Activated CD8-positive, alpha-beta T cell treated with anti-CD3 and anti-CD28 coated beads, Interleukin-2, amount 10 ng/mL, durations not matched to agents 7 days and 5 days (primary cell): ENCODE measurements at regions of chr2 and their contacts with region 1.

Region 1: GRCh38 chr2:85826990-85827878 is 61.6 kb downstream of the ST3GAL5 start:
- DNase-seq: peak; percentile 89
- ATAC-seq: peak; percentile 99
- H3K4me3 Mint-ChIP-seq: peak overlapping the region; percentile 12
- H3K27ac Mint-ChIP-seq: peak overlapping the region; percentile 27
- H3K4me1 Mint-ChIP-seq: peaks cover 35% of the 10 kb centered on the region
- H3K27me3 Mint-ChIP-seq: peaks cover 17% of the 10 kb centered on the region

Region 2: GRCh38 chr2:85468704-85469349 is 358.4 kb before region 1 on chr2:
- CTCF ChIA-PET with region 1: no interaction called
- POLR2A ChIA-PET with region 1: no interaction called
- DNase-seq: no peak
- ATAC-seq: no peak
- H3K4me3 Mint-ChIP-seq: no peak overlapping the region
- H3K27ac Mint-ChIP-seq: no peak overlapping the region
- H3K4me1 Mint-ChIP-seq: peaks cover 7% of the 10 kb centered on the region
- H3K27me3 Mint-ChIP-seq: peaks cover 2% of the 10 kb centered on the region

Region 3: GRCh38 chr2:85813982-85814801 is 13.0 kb before region 1 on chr2:
- CTCF ChIA-PET with region 1: interaction called, 35 read pairs
- POLR2A ChIA-PET with region 1: no interaction called
- DNase-seq: peak; percentile 89
- ATAC-seq: peak; percentile 95
- H3K4me3 Mint-ChIP-seq: no peak overlapping the region
- H3K27ac Mint-ChIP-seq: no peak overlapping the region
- H3K4me1 Mint-ChIP-seq: no peaks in the 10 kb centered on the region
- H3K27me3 Mint-ChIP-seq: peaks cover 15% of the 10 kb centered on the region

Region 4: DNA sequence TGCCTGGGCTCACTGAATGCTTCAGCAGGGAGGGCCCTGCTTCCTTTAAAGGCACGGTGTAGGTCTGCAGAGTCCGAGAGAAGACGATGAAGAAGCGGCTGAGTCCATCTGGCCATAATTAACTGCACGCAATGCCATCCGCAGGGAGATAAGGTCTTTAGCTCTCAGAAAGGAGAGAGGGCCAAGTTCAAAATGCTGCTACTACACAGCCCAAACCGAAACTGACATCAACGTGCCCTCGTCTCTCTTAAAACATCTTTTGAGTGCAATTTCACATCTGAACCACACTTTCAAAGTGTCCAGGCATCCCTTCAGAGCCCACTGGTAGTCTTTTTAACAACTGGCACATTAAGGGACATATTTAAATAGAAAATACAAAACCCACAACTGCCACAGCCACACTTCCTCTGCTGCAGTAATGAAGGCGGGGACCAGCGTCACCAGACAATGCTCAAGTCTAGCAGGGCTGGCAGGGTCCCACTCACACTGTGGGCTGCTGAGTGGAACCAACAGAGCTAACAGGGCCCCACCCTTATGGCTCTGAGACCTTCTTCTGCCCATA is 25.8 kb after region 1 on chr2:
- CTCF ChIA-PET with region 1: interaction called, 80 read pairs
- POLR2A ChIA-PET with region 1: interaction called, 6 read pairs
- DNase-seq: peak; percentile 85
- ATAC-seq: peak; percentile 91
- H3K4me3 Mint-ChIP-seq: peak overlapping the region; percentile 83
- H3K27ac Mint-ChIP-seq: peak overlapping the region; percentile 100
- H3K4me1 Mint-ChIP-seq: peaks cover 57% of the 10 kb centered on the region
- H3K27me3 Mint-ChIP-seq: no peaks in the 10 kb centered on the region

Region 5: DNA sequence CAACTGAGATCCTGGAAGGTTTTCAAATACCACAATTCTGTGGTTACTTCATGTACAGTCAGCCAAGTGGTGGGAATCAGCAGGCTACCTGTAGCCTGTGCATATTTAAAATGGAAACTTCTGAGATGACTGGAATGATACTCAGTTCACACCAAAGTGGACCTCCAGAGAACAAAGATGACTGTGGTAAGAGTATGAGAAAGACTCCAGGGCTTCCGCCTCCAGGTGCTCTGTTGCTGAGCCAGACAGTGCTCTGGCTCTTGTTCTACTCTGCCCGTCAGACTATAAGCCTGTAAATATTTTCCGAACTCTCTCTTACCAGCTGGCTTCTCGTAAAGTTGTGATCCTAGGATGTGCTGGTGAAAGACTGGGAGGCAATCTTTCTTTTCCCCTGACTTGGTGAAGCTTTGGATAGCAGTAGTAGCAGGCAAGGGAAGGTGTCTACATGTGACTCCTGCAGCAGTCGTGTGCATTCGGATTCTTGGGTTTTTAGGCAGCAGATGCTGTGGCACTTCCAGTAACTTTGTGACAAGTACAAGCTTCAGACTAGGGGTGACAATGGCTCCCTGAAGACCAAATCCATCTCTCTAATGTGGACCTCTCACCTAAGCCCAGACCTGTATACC is 38.4 kb after region 1 on chr2:
- CTCF ChIA-PET with region 1: interaction called, 14 read pairs
- POLR2A ChIA-PET with region 1: no interaction called
- DNase-seq: no peak
- ATAC-seq: no peak
- H3K4me3 Mint-ChIP-seq: no peak overlapping the region
- H3K27ac Mint-ChIP-seq: no peak overlapping the region
- H3K4me1 Mint-ChIP-seq: peaks cover 59% of the 10 kb centered on the region
- H3K27me3 Mint-ChIP-seq: no peaks in the 10 kb centered on the region

Region 6: GRCh38 chr2:85888684-85889626 is 61.7 kb after region 1 on chr2 and contains the start of gene ST3GAL5:
- CTCF ChIA-PET with region 1: interaction called, 256 read pairs
- POLR2A ChIA-PET with region 1: interaction called, 6 read pairs
- DNase-seq: peak; percentile 93
- ATAC-seq: peak; percentile 85
- H3K4me3 Mint-ChIP-seq: peak within 1 kb of the TSS; percentile 94
- H3K27ac Mint-ChIP-seq: peak within 1 kb of the TSS; percentile 92
- H3K4me1 Mint-ChIP-seq: peaks cover 68% of the 10 kb centered on the region
- H3K27me3 Mint-ChIP-seq: no peaks in the 10 kb centered on the region
- total RNA-seq, gene ST3GAL5: 43.4 to 46.7 TPM

Region 7: DNA sequence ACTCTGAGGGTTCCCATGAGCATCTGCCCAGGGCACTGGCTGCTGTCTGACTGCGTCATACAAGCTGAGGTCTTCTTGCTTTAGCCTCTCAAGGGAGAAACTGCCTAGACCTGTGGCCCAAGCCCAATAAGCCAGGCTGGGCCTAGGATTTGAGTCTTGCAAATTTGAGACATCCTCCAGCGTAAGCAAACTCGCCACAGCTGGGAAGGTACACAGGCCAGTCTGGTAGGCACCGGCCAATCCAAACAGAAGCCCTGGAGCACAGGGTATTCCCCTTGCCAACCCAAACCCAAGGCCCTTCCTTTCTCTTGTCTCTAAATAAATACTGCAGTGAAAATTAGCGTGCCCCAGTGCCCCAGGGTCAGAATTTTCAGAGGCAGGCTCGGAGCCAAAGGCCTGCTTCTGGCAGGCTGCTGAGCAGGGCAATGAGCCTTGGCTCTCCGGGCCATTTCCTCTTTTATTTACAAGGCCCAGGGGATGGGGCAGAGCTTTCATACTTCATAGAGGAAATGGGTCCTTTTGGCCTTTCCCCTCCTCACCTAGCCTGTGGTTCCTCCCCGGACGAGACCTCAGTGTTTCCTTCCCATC is 245.1 kb after region 1 on chr2:
- CTCF ChIA-PET with region 1: interaction called, 442 read pairs
- POLR2A ChIA-PET with region 1: no interaction called
- DNase-seq: no peak
- ATAC-seq: no peak
- H3K4me3 Mint-ChIP-seq: no peak overlapping the region
- H3K27ac Mint-ChIP-seq: peak overlapping the region; percentile 72
- H3K4me1 Mint-ChIP-seq: peaks cover 47% of the 10 kb centered on the region
- H3K27me3 Mint-ChIP-seq: no peaks in the 10 kb centered on the region

Region 8: GRCh38 chr2:86087936-86088850 is 261.0 kb after region 1 on chr2:
- CTCF ChIA-PET with region 1: interaction called, 442 read pairs
- POLR2A ChIA-PET with region 1: no interaction called
- DNase-seq: no peak
- ATAC-seq: no peak
- H3K4me3 Mint-ChIP-seq: no peak overlapping the region
- H3K27ac Mint-ChIP-seq: no peak overlapping the region
- H3K4me1 Mint-ChIP-seq: no peaks in the 10 kb centered on the region
- H3K27me3 Mint-ChIP-seq: no peaks in the 10 kb centered on the region

Region 9: GRCh38 chr2:86393521-86394491 is 566.6 kb after region 1 on chr2:
- CTCF ChIA-PET with region 1: no interaction called
- POLR2A ChIA-PET with region 1: no interaction called
- DNase-seq: no peak
- ATAC-seq: no peak
- H3K4me3 Mint-ChIP-seq: no peak overlapping the region
- H3K27ac Mint-ChIP-seq: no peak overlapping the region
- H3K4me1 Mint-ChIP-seq: peaks cover 13% of the 10 kb centered on the region
- H3K27me3 Mint-ChIP-seq: no peaks in the 10 kb centered on the region